ENCODE measurements at regions of chr15 and their contacts with region 1.

Region 1: GRCh38 chr15:99104788-99105513 is at the start of gene SYNM:
- DNase-seq: peak; percentile 83
- H3K4me3 ChIP-seq: peak within 1 kb of the TSS; percentile 38 to 44 (median 42)
- H3K27ac ChIP-seq: no peak within 1 kb of the TSS
- H3K4me1 ChIP-seq: peaks cover 7% of the 10 kb centered on the region
- H3K27me3 ChIP-seq: peaks cover 3% of the 10 kb centered on the region in 2 experiments
- CTCF ChIP-seq: peak; percentile 68 to 93
- POLR2A ChIP-seq: peak; percentile 77
- total RNA-seq, gene SYNM: 10.2 and 20.4 TPM in 2 replicates

Region 2: GRCh38 chr15:99090011-99090699 is 14.8 kb before region 1 on chr15:
- CTCF ChIA-PET with region 1: interaction called, 27 read pairs
- POLR2A ChIA-PET with region 1: no interaction called
- dilution Hi-C with region 1: no loop called
- intact Hi-C with region 1: no loop called
- DNase-seq: no peak
- H3K4me3 ChIP-seq: no peak overlapping the region
- H3K27ac ChIP-seq: no peak overlapping the region
- H3K4me1 ChIP-seq: no peaks in the 10 kb centered on the region
- H3K27me3 ChIP-seq: no peaks in the 10 kb centered on the region
- CTCF ChIP-seq: no peak
- POLR2A ChIP-seq: no peak

Region 3: GRCh38 chr15:99135194-99135593 is 30.2 kb after region 1 on chr15:
- CTCF ChIA-PET with region 1: interaction called, 24 read pairs
- POLR2A ChIA-PET with region 1: no interaction called
- dilution Hi-C with region 1: no loop called
- intact Hi-C with region 1: loop called (anchors 1 kb)
- DNase-seq: peak; percentile 54
- H3K4me3 ChIP-seq: no peak overlapping the region
- H3K27ac ChIP-seq: peak overlapping the region; percentile 26
- H3K4me1 ChIP-seq: peaks cover 21% of the 10 kb centered on the region
- H3K27me3 ChIP-seq: no peaks in the 10 kb centered on the region
- CTCF ChIP-seq: no peak
- POLR2A ChIP-seq: no peak

Region 4: DNA sequence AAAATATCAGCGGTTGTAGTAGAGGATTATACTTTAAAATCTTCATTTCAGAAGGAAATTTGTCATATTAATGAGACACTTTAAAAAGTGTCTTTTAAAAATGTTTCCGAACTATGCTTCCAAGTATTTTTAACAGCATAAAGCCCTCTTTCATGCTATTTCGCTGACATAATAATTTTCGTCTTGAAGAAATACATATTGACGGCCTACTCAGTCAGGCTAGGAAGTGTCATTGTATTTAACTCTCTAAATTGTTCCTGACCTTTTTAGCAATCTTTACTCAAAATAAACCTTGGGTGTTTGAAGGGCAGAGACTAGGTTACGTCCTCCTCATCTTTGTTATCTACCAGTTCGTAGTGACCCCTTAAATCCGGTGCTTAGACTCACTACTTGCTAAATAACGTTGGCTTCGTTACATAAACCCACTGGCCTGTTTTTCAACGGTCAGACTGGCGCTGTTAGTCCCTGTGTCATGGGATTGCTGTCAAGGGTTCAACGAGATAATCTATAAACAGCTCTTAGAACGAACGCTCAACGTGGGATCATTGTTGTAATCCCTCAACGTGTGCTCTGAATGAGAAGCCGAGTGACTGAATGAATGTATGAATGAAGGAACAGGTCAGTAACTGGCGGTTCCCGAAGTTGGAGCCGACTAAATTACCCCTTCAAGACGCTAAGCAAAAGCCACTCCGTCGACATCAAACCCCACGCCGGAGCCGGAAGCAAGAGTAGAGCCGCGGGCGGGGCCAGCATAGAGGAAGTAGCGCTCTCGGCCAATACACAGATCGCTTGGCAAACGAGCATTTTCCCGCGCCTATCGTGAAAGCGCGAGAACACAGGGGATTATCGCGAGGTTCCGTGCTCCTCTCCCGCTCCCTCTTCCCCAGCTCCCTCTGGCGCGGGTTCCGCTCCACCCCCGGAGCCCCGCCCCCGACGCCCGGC is 145.8 kb after region 1 on chr15:
- CTCF ChIA-PET with region 1: interaction called, 8 read pairs
- POLR2A ChIA-PET with region 1: no interaction called
- dilution Hi-C with region 1: no loop called
- intact Hi-C with region 1: loop called (anchors 1 kb)
- DNase-seq: peak; percentile 100
- H3K4me3 ChIP-seq: peak overlapping the region; percentile 77 to 100 (median 80)
- H3K27ac ChIP-seq: peak overlapping the region; percentile 89
- H3K4me1 ChIP-seq: peaks cover 30% of the 10 kb centered on the region
- H3K27me3 ChIP-seq: no peaks in the 10 kb centered on the region
- CTCF ChIP-seq: no peak
- POLR2A ChIP-seq: peak; percentile 89

Region 5: GRCh38 chr15:99343881-99344551 is 239.1 kb after region 1 on chr15:
- CTCF ChIA-PET with region 1: no interaction called
- POLR2A ChIA-PET with region 1: no interaction called
- dilution Hi-C with region 1: no loop called
- intact Hi-C with region 1: loop called (anchors 10 kb)
- DNase-seq: peak; percentile 75
- H3K4me3 ChIP-seq: no peak overlapping the region
- H3K27ac ChIP-seq: peak overlapping the region; percentile 13
- H3K4me1 ChIP-seq: peaks cover 14% of the 10 kb centered on the region
- H3K27me3 ChIP-seq: no peaks in the 10 kb centered on the region
- CTCF ChIP-seq: peak; percentile 68 to 70
- POLR2A ChIP-seq: no peak

Region 6: DNA sequence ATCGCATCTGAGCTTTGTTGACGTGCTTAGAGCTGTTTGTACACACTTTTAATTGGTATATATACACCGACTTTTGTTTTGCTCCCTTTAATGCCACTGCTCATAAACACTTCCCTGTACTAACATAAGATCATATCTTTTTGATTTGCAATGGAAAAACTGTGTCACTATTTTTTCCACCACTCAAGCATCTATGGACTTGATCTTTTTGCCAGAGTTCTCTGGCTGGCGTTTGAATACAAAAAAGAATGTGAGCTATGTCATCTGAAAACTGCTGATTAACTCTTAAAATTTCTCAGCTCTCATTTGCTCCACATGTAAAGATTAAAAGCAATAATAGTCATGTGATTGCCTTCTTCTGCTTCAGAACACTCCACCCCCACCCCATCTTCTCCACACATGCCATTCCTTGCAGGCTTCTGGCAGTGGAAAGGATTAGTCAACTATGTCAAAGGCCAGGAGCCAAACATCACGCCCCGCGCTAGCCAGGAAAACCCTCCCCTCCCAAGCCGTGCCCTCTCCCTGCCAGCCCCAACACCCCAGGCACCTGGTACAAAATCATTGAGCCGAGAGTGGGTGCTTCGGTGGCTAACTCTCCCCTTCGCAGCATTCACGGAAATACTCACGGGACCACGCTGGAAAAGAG is 337.4 kb after region 1 on chr15:
- CTCF ChIA-PET with region 1: no interaction called
- POLR2A ChIA-PET with region 1: no interaction called
- dilution Hi-C with region 1: no loop called
- intact Hi-C with region 1: no loop called
- DNase-seq: peak; percentile 94
- H3K4me3 ChIP-seq: no peak overlapping the region
- H3K27ac ChIP-seq: peak overlapping the region; percentile 47
- H3K4me1 ChIP-seq: peaks cover 21% of the 10 kb centered on the region
- H3K27me3 ChIP-seq: no peaks in the 10 kb centered on the region
- CTCF ChIP-seq: no peak
- POLR2A ChIP-seq: no peak